ENCODE measurements at regions of chr2 and their contacts with region 1.

Region 1: GRCh38 chr2:232085179-232085578 is 123.7 kb downstream of the DIS3L2 start:
- DNase-seq: no peak
- ATAC-seq: no peak
- H3K4me3 ChIP-seq: no peak overlapping the region
- H3K27ac ChIP-seq: no peak overlapping the region
- H3K4me1 ChIP-seq: no peaks in the 10 kb centered on the region
- H3K27me3 ChIP-seq: no peaks in the 10 kb centered on the region
- CTCF ChIP-seq: no peak

Region 2: DNA sequence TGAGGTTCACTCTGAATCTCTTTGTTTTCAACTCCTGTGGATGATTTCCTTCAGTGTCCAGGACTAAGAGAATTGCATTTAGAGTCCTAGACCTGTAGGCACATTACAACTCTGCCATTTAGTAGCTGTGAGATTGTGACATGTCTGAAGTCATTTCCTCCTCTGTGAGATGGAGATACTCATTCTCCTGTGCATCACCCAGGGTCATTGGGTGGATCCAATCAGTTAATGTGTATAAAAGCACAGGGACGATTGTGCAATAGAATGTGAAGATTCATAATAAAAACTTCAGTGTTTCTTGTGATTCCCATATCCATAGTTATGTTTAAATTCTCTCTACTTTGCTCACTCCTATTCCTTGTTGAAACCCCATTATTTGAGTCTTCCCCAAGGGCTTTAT is 10.1 kb before region 1 on chr2:
- CTCF ChIA-PET with region 1: no interaction called
- POLR2A ChIA-PET with region 1: interaction called, 10 read pairs
- in situ Hi-C with region 1: no loop called
- intact Hi-C with region 1: no loop called
- DNase-seq: no peak
- ATAC-seq: no peak
- H3K4me3 ChIP-seq: no peak overlapping the region
- H3K27ac ChIP-seq: no peak overlapping the region
- H3K4me1 ChIP-seq: no peaks in the 10 kb centered on the region
- H3K27me3 ChIP-seq: no peaks in the 10 kb centered on the region
- CTCF ChIP-seq: no peak

Region 3: DNA sequence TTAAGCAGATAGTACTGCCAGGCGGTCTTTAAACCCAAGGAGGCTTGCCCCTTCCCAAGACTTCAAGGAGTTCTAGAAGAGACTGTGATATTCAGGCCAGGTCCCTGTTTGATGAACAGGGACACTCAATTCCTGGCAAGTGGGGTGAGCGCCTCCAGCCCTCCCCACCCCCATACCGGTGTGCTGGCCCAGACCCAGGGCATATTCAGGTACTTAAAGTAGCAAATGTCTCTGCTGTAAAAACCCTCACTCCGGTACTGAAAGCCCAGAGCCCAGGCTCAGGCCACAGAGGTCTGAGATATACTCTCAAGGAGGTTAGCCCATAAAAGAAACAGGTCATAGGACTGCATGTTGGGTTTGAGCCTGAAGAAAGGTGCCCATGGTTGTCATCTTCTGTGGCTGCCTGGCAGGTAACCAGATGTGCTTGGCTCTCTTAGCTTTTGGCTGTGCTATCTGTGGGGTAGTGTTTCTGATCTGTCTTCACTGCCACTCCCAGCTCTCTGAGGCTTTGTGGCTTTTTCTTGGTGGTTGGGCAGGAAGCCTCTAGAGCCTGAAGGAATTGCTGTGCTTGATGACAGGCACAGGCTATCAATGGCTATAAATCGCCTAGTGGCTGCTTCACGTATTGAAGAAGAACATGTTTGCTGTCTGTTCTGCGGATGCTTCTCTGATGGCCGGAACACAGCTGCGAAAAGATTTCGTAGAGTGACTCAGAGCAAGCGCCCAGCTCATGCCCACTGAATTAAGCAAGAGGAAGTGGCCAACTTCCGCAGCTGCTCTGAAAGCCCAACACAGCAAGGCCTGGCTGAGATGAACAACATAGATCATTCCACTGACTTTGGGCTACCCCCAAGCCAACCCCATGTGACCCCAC is 230.1 kb after region 1 on chr2:
- CTCF ChIA-PET with region 1: no interaction called
- POLR2A ChIA-PET with region 1: no interaction called
- in situ Hi-C with region 1: no loop called
- intact Hi-C with region 1: no loop called
- DNase-seq: no peak
- ATAC-seq: no peak
- H3K4me3 ChIP-seq: no peak overlapping the region
- H3K27ac ChIP-seq: no peak overlapping the region
- H3K4me1 ChIP-seq: no peaks in the 10 kb centered on the region
- H3K27me3 ChIP-seq: no peaks in the 10 kb centered on the region
- CTCF ChIP-seq: no peak